ENCODE measurements at regions of chr14 and their contacts with region 1.

Region 1: DNA sequence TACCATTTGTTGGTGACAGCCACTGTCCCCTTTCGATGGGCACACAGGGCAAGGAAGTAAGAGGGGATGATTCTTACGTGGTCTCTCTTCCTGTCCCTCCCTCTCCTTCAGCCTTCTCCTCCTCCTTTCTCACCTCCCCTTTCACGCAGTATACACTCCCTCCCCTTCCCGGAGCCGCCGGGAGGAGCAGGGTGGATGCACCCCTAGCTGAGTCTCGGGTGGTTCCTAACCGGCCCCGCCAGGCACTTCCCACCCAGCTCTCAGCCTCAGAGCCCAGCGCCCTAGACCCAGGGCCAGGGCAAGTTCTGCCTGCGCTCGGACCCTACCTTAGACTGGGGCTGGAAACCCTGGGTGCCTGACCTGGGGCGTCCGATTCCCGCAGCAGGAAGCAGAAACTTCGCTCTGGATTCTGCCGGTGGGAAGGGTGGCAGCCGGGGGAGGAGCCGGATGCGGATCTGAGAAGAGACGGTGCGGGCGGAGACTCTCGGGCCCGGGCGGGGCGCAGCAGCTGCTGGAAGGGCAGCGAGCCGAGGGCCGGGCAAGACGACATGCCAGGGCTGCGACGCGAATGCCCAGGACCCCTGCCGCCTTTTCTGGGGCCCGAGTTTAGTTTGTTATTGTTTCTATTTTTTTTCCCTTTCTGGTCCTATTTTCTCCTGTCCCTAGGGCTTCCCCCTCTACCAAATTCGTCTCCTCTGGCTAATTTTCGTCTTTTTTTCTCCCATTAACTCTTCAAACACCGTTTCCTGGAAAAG is at the start of gene TEP1:
- DNase-seq: peak; percentile 85 to 88
- H3K4me3 ChIP-seq: peak within 1 kb of the TSS; percentile 97
- H3K4me3 Mint-ChIP-seq: peak within 1 kb of the TSS; percentile 97
- H3K27ac Mint-ChIP-seq: peak within 1 kb of the TSS; percentile 93
- H3K4me1 ChIP-seq: peaks cover 32% of the 10 kb centered on the region
- H3K4me1 Mint-ChIP-seq: peaks cover 19% of the 10 kb centered on the region
- H3K27me3 ChIP-seq: no peaks in the 10 kb centered on the region
- H3K27me3 Mint-ChIP-seq: no peaks in the 10 kb centered on the region
- CTCF ChIP-seq: no peak
- total RNA-seq, gene TEP1: 18.8 and 23.2 TPM in 2 replicates

Region 2: GRCh38 chr14:19878029-19878642 is 535.1 kb before region 1 on chr14:
- CTCF ChIA-PET with region 1: no interaction called
- POLR2A ChIA-PET with region 1: no interaction called
- intact Hi-C with region 1: no loop called
- DNase-seq: peak in 1 of 2 experiments; percentile 5
- H3K4me3 ChIP-seq: no peak overlapping the region
- H3K4me3 Mint-ChIP-seq: no peak overlapping the region
- H3K27ac Mint-ChIP-seq: no peak overlapping the region
- H3K4me1 ChIP-seq: no peaks in the 10 kb centered on the region
- H3K4me1 Mint-ChIP-seq: no peaks in the 10 kb centered on the region
- H3K27me3 ChIP-seq: no peaks in the 10 kb centered on the region
- H3K27me3 Mint-ChIP-seq: no peaks in the 10 kb centered on the region
- CTCF ChIP-seq: peak; percentile 30 to 69

Region 3: GRCh38 chr14:20262642-20263128 is 150.5 kb before region 1 on chr14:
- CTCF ChIA-PET with region 1: no interaction called
- POLR2A ChIA-PET with region 1: no interaction called
- intact Hi-C with region 1: no loop called
- DNase-seq: no peak
- H3K4me3 ChIP-seq: no peak overlapping the region
- H3K4me3 Mint-ChIP-seq: no peak overlapping the region
- H3K27ac Mint-ChIP-seq: no peak overlapping the region
- H3K4me1 ChIP-seq: no peaks in the 10 kb centered on the region
- H3K4me1 Mint-ChIP-seq: no peaks in the 10 kb centered on the region
- H3K27me3 ChIP-seq: no peaks in the 10 kb centered on the region
- H3K27me3 Mint-ChIP-seq: no peaks in the 10 kb centered on the region
- CTCF ChIP-seq: no peak

Region 4: DNA sequence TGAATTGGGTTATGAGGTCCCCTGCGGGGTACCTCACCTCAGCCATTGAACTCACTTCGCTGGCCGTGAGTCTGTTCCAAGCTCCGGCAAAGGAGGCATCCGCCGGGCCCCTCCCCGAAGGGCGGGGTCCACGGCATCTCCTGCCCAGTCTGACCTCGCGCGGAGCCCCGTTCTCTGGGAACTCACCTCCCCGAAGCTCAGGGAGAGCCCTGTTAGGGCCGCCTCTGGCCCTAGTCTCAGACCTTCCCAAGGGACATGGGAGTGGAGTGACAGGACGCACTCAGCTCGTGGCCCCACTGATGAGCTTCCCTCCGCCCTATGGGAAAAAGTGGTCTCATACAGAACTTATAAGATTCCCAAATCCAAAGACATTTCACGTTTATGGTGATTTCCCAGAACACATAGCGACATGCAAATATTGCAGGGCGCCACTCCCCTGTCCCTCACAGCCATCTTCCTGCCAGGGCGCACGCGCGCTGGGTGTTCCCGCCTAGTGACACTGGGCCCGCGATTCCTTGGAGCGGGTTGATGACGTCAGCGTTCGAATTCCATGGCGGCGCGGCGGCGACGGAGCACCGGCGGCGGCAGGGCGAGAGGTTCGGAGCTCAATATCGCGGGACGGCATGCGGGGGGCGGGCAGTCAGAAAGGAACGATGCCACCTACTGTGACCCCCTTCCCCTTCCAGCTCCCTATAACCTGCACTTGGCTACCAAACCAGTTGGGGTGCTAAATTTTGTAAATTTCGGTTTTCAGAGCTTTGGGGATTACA is 69.9 kb before region 1 on chr14 and contains the start of gene PARP2:
- CTCF ChIA-PET with region 1: interaction called, 8 read pairs
- POLR2A ChIA-PET with region 1: interaction called, 11 read pairs
- intact Hi-C with region 1: loop called (anchors 1 kb)
- DNase-seq: peak; percentile 99 to 100
- H3K4me3 ChIP-seq: peak within 1 kb of the TSS; percentile 78
- H3K4me3 Mint-ChIP-seq: peak within 1 kb of the TSS; percentile 92
- H3K27ac Mint-ChIP-seq: peak within 1 kb of the TSS; percentile 98
- H3K4me1 ChIP-seq: no peaks in the 10 kb centered on the region
- H3K4me1 Mint-ChIP-seq: peaks cover 11% of the 10 kb centered on the region
- H3K27me3 ChIP-seq: no peaks in the 10 kb centered on the region
- H3K27me3 Mint-ChIP-seq: no peaks in the 10 kb centered on the region
- CTCF ChIP-seq: no peak
- total RNA-seq, gene PARP2: 41.1 and 49.4 TPM in 2 replicates

Region 5: DNA sequence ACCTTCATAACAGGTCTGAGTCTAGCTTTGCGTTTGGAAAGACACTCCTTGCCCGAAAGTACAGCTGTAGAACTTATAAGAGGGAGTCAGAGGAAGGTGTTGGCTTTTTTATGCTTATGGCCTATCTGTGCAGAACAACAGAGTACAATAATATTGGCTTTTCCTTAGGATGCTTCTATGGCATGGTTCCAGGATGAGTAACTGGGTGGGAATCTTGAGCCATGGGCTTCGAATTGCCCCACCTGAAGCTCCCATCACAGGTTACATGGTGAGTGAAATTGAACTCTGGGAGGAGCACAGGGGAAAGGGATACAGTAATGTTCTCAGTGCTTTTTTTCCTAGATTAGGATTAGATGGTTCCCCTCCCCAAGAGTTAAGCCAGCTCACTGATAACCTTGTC is 56.8 kb before region 1 on chr14:
- CTCF ChIA-PET with region 1: no interaction called
- POLR2A ChIA-PET with region 1: no interaction called
- intact Hi-C with region 1: no loop called
- DNase-seq: no peak
- H3K4me3 ChIP-seq: no peak overlapping the region
- H3K4me3 Mint-ChIP-seq: no peak overlapping the region
- H3K27ac Mint-ChIP-seq: no peak overlapping the region
- H3K4me1 ChIP-seq: no peaks in the 10 kb centered on the region
- H3K4me1 Mint-ChIP-seq: no peaks in the 10 kb centered on the region
- H3K27me3 ChIP-seq: no peaks in the 10 kb centered on the region
- H3K27me3 Mint-ChIP-seq: no peaks in the 10 kb centered on the region
- CTCF ChIP-seq: no peak

Region 6: DNA sequence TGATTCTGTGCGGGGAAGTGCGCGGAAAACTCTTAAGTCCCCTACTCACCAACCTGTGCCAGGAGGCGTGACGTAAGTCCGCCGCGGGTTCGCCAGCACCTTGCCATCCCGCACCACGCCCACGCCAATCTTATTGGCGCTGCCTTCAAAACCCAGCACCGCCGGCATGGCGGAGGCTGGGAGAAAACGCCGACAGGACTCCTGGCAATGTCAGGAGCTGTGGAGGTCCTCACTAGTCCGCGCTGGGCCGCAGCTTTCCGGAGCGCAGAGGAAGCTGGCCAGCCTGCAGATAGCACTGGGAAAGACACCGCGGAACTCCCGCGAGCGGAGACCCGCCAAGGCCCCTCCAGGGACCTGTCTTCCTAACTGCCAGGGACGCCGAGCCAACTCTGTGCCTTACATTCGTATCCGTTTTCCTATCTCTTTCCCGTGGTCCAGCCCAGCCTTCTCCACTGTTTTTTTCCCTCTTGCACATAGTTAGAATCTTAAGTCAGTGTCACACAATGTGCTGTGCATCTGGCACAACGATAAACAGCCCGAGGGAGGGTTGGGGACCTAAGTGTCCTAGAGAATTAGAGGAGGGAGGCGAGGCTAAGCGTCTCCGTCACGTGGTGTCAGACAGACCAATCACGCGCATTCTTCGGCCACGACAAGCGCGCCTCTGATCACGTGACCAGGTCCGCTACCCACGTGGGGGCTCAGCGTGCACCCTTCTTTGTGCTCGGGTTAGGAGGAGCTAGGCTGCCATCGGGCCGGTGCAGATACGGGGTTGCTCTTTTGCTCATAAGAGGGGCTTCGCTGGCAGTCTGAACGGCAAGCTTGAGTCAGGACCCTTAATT is 41.5 kb after region 1 on chr14 and contains the starts of genes APEX1 and OSGEP:
- CTCF ChIA-PET with region 1: interaction called, 9 read pairs
- POLR2A ChIA-PET with region 1: interaction called, 11 read pairs
- intact Hi-C with region 1: loop called (anchors 1 kb)
- DNase-seq: peak; percentile 97 to 99
- H3K4me3 ChIP-seq: peak within 1 kb of the TSS; percentile 63
- H3K4me3 Mint-ChIP-seq: no peak within 1 kb of the TSS
- H3K27ac Mint-ChIP-seq: no peak within 1 kb of the TSS
- H3K4me1 ChIP-seq: no peaks in the 10 kb centered on the region
- H3K4me1 Mint-ChIP-seq: peaks cover 1% of the 10 kb centered on the region
- H3K27me3 ChIP-seq: no peaks in the 10 kb centered on the region
- H3K27me3 Mint-ChIP-seq: no peaks in the 10 kb centered on the region
- CTCF ChIP-seq: no peak
- total RNA-seq, gene APEX1: 176 and 185 TPM in 2 replicates
- total RNA-seq, gene OSGEP: 63.1 and 64.3 TPM in 2 replicates

Region 7: GRCh38 chr14:20469242-20469889 is 56.1 kb after region 1 on chr14 and contains the start of gene PNP:
- CTCF ChIA-PET with region 1: interaction called, 5 read pairs
- POLR2A ChIA-PET with region 1: interaction called, 9 read pairs
- intact Hi-C with region 1: loop called (anchors 1 kb)
- DNase-seq: peak; percentile 94
- H3K4me3 ChIP-seq: peak within 1 kb of the TSS; percentile 90
- H3K4me3 Mint-ChIP-seq: peak within 1 kb of the TSS; percentile 83
- H3K27ac Mint-ChIP-seq: peak within 1 kb of the TSS; percentile 90
- H3K4me1 ChIP-seq: peaks cover 9% of the 10 kb centered on the region
- H3K4me1 Mint-ChIP-seq: peaks cover 21% of the 10 kb centered on the region
- H3K27me3 ChIP-seq: no peaks in the 10 kb centered on the region
- H3K27me3 Mint-ChIP-seq: no peaks in the 10 kb centered on the region
- CTCF ChIP-seq: no peak
- total RNA-seq, gene PNP: 59.1 and 67.2 TPM in 2 replicates

Region 8: GRCh38 chr14:20482382-20482781 is 69.2 kb after region 1 on chr14:
- CTCF ChIA-PET with region 1: no interaction called
- POLR2A ChIA-PET with region 1: no interaction called
- intact Hi-C with region 1: no loop called
- DNase-seq: no peak
- H3K4me3 ChIP-seq: no peak overlapping the region
- H3K4me3 Mint-ChIP-seq: no peak overlapping the region
- H3K27ac Mint-ChIP-seq: no peak overlapping the region
- H3K4me1 ChIP-seq: peaks cover 11% of the 10 kb centered on the region; the same call in 1 of the 2 replicates
- H3K4me1 Mint-ChIP-seq: peaks cover 17% of the 10 kb centered on the region
- H3K27me3 ChIP-seq: no peaks in the 10 kb centered on the region
- H3K27me3 Mint-ChIP-seq: no peaks in the 10 kb centered on the region
- CTCF ChIP-seq: no peak

Region 9: GRCh38 chr14:20546877-20547276 is 133.7 kb after region 1 on chr14:
- CTCF ChIA-PET with region 1: interaction called, 10 read pairs
- POLR2A ChIA-PET with region 1: no interaction called
- intact Hi-C with region 1: loop called (anchors 10 kb)
- DNase-seq: peak; percentile 78 to 81
- H3K4me3 ChIP-seq: no peak overlapping the region
- H3K4me3 Mint-ChIP-seq: peak overlapping the region; percentile 46
- H3K27ac Mint-ChIP-seq: peak overlapping the region; percentile 57
- H3K4me1 ChIP-seq: peaks cover 14% of the 10 kb centered on the region
- H3K4me1 Mint-ChIP-seq: peaks cover 15% of the 10 kb centered on the region
- H3K27me3 ChIP-seq: no peaks in the 10 kb centered on the region
- H3K27me3 Mint-ChIP-seq: no peaks in the 10 kb centered on the region
- CTCF ChIP-seq: no peak

Region 10: DNA sequence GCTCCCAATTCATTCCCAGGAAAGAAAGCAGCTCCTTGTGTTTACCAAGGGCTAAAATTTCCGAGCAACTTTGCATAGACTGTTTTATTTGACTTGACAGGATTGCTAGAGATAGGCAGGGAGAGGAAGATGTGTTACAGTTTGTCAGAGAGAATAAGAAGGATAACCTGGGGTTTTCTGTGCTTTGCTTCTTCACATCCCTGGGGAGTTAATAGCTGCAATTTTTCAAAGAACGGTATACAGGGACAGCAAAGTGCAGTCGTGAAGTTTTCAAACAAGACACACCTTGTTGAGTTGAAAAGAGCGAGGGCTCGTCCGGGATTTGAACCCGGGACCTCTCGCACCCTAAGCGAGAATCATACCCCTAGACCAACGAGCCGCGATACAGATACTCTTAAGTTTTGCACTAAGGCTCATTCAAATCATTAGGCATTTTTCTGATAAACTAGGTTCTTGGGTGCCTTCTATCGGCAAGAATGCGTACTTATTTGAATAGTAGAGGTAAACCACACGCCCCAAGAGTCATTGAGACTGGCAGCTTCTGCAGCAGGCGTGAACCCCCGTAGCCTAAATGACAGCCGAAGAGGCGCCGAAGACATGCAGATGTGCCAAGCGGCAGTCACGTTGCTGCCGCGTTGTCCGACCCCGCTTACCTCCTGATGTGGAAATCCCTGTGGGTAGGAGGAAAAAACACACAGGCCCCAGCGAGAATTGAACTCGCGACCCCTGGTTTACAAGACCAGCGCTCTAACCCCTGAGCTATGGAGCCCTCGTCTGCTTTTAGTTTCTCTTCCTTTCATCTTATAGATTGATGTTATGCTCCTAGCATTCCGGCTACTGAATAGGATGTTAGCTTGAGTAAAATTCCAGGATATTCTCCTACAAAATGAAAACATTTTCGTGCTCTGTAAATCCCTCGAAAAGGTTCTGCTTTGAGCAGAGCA is 200.1 kb after region 1 on chr14:
- CTCF ChIA-PET with region 1: interaction called, 3 read pairs
- POLR2A ChIA-PET with region 1: no interaction called
- intact Hi-C with region 1: loop called (anchors 1 kb)
- DNase-seq: peak; percentile 91 to 96
- H3K4me3 ChIP-seq: peak overlapping the region; percentile 66
- H3K4me3 Mint-ChIP-seq: no peak overlapping the region
- H3K27ac Mint-ChIP-seq: no peak overlapping the region
- H3K4me1 ChIP-seq: 0 out of 2 replicates have a peak, but pooled peaks cover 4% of the 10 kb centered on the region
- H3K4me1 Mint-ChIP-seq: peaks cover 22% of the 10 kb centered on the region
- H3K27me3 ChIP-seq: no peaks in the 10 kb centered on the region
- H3K27me3 Mint-ChIP-seq: no peaks in the 10 kb centered on the region
- CTCF ChIP-seq: peak; percentile 64 to 83

Measured in Caco-2 (cell line).